Kidney (tissue), 22 donors: ENCODE measurements at regions of chr15 and their contacts with region 1.

Region 1: DNA sequence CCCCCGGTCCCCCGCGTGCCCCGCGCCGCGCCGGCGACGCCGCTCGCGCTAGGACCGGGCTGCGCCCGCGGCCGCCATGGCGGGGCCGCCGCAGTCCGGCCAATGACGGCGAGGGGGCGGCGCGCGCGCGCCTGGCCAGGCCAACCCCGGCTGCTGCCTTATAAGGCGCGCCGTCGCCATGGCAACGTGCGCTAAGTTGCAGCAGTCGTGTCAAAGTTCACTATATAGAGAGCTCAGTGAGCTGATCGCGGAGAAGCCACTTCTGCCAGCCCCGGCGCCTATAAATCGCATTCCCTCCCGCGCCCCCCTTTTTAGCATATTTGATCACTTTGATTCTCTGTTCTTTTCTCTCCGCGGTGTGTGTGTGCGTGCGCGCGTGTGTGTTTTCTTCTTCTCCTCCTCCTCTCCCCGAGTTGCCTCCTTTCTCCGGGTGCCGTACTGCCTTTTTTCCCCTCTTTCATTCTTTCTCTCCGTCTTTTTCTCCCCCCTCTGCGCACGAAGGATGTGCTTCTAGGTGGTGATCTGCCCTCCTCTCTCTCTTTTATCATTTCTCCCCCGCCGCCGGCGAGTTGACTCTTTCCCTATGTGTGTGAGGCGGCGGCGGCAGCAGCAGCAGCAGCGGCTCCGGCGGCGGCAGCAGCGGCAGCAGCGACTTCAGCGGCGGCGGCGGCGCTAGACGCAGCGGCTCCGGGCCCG is at the start of gene NR2F2:
- DNase-seq: peak; percentile 98 to 100 (median 99)
- H3K4me3 ChIP-seq: peak within 1 kb of the TSS; percentile 88 to 100 (median 97)
- H3K27ac ChIP-seq: peak within 1 kb of the TSS; percentile 95 to 99
- H3K4me1 ChIP-seq: peaks cover 0 to 11% (median 0%) of the 10 kb centered on the region in 3 donors
- H3K27me3 ChIP-seq: no peaks in the 10 kb centered on the region
- CTCF ChIP-seq: no peak
- total RNA-seq, gene NR2F2: 191 TPM

Region 2: GRCh38 chr15:95284933-95285421 is 1045.6 kb before region 1 on chr15:
- intact Hi-C with region 1: loop called (anchors 10 kb)
- DNase-seq: peak in 4 of 5 donors; percentile 37 to 94 (median 78)
- H3K4me3 ChIP-seq: no peak overlapping the region
- H3K27ac ChIP-seq: no peak overlapping the region
- H3K4me1 ChIP-seq: peaks cover 0 to 12% (median 0%) of the 10 kb centered on the region in 3 donors
- H3K27me3 ChIP-seq: no peaks in the 10 kb centered on the region
- CTCF ChIP-seq: no peak

Region 3: GRCh38 chr15:96893159-96893906 is 562.7 kb after region 1 on chr15:
- intact Hi-C with region 1: loop called (anchors 10 kb)
- DNase-seq: peak in 4 of 5 donors; percentile 42 to 66 (median 52)
- H3K4me3 ChIP-seq: no peak overlapping the region
- H3K27ac ChIP-seq: no peak overlapping the region
- H3K4me1 ChIP-seq: no peaks in the 10 kb centered on the region
- H3K27me3 ChIP-seq: no peaks in the 10 kb centered on the region
- CTCF ChIP-seq: peak; percentile 51